Activated naive CD4-positive, alpha-beta T cell treated with anti-CD3 and anti-CD28 coated beads for 36 hours (primary cell): ENCODE measurements at regions of chr13 and their contacts with region 1.

Region 1: DNA sequence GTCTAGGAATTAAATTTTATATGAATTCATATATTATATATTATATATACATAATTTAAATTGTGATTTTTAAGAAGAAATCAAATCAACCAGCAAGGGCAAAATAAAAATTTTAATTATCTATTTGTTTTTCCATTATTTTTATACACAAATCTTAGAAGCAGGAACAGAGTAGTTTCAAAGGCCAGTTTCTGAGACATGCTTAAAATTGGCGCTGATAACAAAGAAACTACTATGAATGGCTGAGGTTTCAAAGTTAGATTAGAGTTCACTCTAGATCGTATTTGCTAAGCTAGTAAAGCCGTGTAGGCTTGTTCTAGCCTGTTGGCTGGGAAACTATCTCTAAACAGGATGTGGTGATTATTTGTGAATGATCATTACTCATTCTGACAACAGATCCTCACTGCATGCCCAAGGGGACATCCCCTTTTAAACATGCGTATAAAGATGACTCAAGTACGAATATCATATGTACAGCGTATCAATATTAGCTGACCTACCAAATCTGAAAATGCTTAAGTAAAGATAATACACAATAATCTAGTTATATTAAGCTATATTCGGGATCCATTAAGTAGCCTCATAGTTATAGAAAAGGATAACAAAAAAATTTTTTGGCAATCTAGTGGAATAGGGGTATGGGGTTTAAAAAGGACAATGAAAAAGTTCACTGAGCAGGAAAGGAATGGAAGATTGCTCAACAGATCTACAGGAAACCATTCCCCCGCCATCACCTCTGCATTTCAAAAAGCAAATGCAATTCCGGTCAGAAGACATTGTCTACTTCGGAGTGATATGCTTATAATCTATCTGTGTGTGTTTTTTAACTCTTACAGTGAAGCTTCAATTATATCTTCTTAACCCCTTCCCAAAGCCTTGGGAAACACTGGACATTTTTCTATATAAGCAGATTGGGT is 150.1 kb downstream of the SHISA2 start:
- DNase-seq: peak; percentile 57
- H3K4me3 Mint-ChIP-seq: no peak overlapping the region
- H3K27ac Mint-ChIP-seq: no peak overlapping the region
- H3K4me1 Mint-ChIP-seq: peaks cover 25% of the 10 kb centered on the region
- H3K27me3 Mint-ChIP-seq: no peaks in the 10 kb centered on the region

Region 2: DNA sequence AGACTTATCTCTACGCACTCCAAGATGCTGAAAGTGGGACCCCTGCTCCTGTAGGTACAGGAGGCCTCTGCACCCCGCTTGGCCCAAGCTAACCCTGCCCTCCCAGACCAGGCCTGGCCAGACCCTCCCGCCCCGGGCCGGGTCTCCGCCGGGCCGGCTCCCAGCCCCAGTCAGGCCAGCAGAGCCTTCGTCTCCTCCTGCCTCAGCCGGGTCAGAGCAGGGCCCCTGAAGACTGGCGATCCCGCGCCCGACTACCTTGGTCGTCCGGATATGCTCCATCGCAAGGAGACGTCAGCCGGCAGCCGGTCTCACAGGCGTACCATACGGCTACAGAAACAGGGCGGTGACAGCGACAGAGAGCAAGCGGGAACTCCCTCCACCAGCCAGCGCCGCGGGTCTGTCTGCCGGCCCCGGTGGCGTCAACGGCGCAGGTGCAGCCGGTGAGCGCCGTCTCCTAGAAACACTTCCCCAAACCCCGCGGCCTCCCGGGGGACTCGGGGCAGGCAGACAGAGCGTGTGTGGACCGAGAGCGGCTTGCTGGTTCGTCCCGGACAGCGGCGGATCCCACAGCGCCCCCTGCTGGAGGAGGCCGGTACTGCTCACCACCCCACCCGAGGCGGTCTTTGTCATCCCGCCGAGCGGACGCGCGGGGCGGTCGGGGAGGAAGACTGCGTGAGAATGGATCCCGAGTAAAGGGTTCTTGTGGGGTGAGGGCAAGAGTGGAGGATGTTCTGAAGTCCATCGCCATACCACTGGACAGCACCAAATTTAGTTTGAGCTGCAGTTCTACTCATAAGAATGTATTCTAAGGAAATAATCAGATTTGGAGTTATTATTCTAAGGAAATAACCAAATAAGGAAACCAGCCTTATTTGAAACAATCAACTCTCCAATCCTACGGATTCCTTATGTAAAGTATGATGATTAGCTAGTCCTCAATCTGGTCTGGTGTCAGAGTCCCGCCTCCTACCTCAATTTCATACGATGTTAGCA is 614.5 kb before region 1 on chr13 and contains the start of gene MTMR6:
- CTCF ChIA-PET with region 1: no interaction called
- intact Hi-C with region 1: loop called (anchors 10 kb)
- DNase-seq: peak; percentile 95
- H3K4me3 Mint-ChIP-seq: peak within 1 kb of the TSS; percentile 93
- H3K27ac Mint-ChIP-seq: peak within 1 kb of the TSS; percentile 92
- H3K4me1 Mint-ChIP-seq: peaks cover 40% of the 10 kb centered on the region
- H3K27me3 Mint-ChIP-seq: peaks cover 3% of the 10 kb centered on the region
- total RNA-seq, gene MTMR6: 5.5 to 5.7 TPM

Region 3: DNA sequence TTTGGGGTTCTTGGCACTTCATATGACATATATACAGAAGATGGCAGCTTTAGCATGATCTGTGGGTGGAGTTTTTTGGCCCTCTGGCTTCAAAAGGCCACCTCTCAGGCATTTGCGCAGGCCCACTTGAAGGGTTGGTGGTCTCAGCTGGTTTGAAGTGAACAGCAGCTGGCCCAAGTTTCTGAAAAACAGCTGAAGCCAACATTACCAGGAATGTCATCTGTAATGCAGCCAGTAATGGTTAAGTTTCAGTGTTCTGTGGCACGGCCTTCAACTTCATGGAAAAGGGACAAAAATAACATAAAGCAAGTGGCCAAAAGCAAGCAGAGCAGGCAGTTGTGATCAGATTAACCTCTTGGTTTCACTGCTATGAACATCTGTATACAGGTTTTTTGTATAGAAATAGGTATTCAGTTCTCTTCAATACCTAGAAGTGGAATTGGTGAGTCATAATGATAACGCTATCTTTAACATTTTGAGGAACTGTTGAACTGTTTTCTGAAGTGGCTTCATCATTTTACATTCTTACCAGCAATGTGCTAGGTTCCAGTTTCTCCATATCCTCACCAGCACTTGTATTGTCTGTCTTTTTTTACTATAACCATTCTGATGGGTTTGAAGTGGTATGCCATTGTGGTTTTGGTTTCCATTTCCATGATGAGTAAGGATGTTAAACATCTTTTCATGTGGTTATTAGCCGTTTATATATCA is 95.3 kb before region 1 on chr13:
- CTCF ChIA-PET with region 1: no interaction called
- intact Hi-C with region 1: loop called (anchors 2 kb)
- DNase-seq: peak; percentile 7
- H3K4me3 Mint-ChIP-seq: no peak overlapping the region
- H3K27ac Mint-ChIP-seq: peak overlapping the region; percentile 50
- H3K4me1 Mint-ChIP-seq: peaks cover 12% of the 10 kb centered on the region
- H3K27me3 Mint-ChIP-seq: peaks cover 18% of the 10 kb centered on the region

Region 4: GRCh38 chr13:25874907-25875306 is 26.8 kb before region 1 on chr13:
- CTCF ChIA-PET with region 1: interaction called, 3 read pairs
- intact Hi-C with region 1: loop called (anchors 1 kb)
- DNase-seq: peak; percentile 87
- H3K4me3 Mint-ChIP-seq: peak overlapping the region; percentile 40
- H3K27ac Mint-ChIP-seq: peak overlapping the region; percentile 87
- H3K4me1 Mint-ChIP-seq: peaks cover 70% of the 10 kb centered on the region
- H3K27me3 Mint-ChIP-seq: no peaks in the 10 kb centered on the region

Region 5: GRCh38 chr13:25971459-25972145 is 69.9 kb after region 1 on chr13:
- CTCF ChIA-PET with region 1: no interaction called
- intact Hi-C with region 1: loop called (anchors 1 kb)
- DNase-seq: peak; percentile 76
- H3K4me3 Mint-ChIP-seq: no peak overlapping the region
- H3K27ac Mint-ChIP-seq: peak overlapping the region; percentile 46
- H3K4me1 Mint-ChIP-seq: peaks cover 42% of the 10 kb centered on the region
- H3K27me3 Mint-ChIP-seq: no peaks in the 10 kb centered on the region

Region 6: GRCh38 chr13:26051657-26052311 is 150.1 kb after region 1 on chr13 and contains the start of gene SHISA2:
- CTCF ChIA-PET with region 1: no interaction called
- intact Hi-C with region 1: loop called (anchors 2 kb)
- DNase-seq: peak; percentile 34
- H3K4me3 Mint-ChIP-seq: peak within 1 kb of the TSS; percentile 66
- H3K27ac Mint-ChIP-seq: no peak within 1 kb of the TSS
- H3K4me1 Mint-ChIP-seq: peaks cover 19% of the 10 kb centered on the region
- H3K27me3 Mint-ChIP-seq: peaks cover 15% of the 10 kb centered on the region
- total RNA-seq, gene SHISA2: 0.52 to 0.69 TPM